ENCODE measurements at regions of chr18 and their contacts with region 1.

Region 1: DNA sequence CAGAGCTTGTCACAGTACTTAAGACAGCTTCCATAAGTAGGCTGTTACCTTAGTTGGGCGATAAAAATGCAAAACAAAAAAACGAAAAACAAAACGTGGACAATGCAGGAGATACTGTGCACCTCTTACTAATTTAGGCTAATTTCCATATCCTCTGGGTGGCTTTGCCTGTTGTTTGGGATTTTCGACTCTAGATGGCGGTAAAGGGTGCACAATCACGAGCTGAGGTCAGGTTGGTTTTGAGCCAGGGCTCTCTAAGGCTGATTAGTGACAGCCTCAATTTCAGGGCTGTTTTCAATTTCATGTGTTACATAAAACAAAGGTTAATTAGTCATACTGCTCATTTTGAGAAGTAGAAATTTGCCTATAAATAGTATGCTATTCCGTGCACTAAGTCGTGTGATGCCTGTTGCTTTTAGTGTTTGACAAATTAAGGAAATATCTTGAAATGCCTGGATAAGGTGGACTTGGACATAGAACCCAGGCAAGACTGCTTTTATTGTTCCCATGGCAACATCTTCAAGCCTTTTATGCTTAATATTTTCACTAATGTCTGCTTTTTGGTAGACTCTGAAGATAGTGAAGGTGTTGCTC is 493.1 kb downstream of the SOCS6 start:
- DNase-seq: peak; percentile 36 to 37
- H3K4me3 ChIP-seq: no peak overlapping the region
- H3K27ac ChIP-seq: no peak overlapping the region
- H3K4me1 ChIP-seq: no peaks in the 10 kb centered on the region
- H3K27me3 ChIP-seq: no peaks in the 10 kb centered on the region
- CTCF ChIP-seq: peak; percentile 80

Region 2: GRCh38 chr18:70523035-70523791 is 258.7 kb before region 1 on chr18:
- CTCF ChIA-PET with region 1: no interaction called
- POLR2A ChIA-PET with region 1: no interaction called
- intact Hi-C with region 1: no loop called
- DNase-seq: no peak
- H3K4me3 ChIP-seq: no peak overlapping the region
- H3K27ac ChIP-seq: no peak overlapping the region
- H3K4me1 ChIP-seq: no peaks in the 10 kb centered on the region
- H3K27me3 ChIP-seq: no peaks in the 10 kb centered on the region
- CTCF ChIP-seq: no peak

Region 3: GRCh38 chr18:72086421-72086820 is 1304.5 kb after region 1 on chr18:
- CTCF ChIA-PET with region 1: no interaction called
- POLR2A ChIA-PET with region 1: no interaction called
- intact Hi-C with region 1: loop called (anchors 5 kb)
- DNase-seq: peak in 1 of 2 experiments; percentile 37
- H3K4me3 ChIP-seq: no peak overlapping the region
- H3K27ac ChIP-seq: no peak overlapping the region
- H3K4me1 ChIP-seq: no peaks in the 10 kb centered on the region
- H3K27me3 ChIP-seq: no peaks in the 10 kb centered on the region
- CTCF ChIP-seq: peak; percentile 63